Thyroid gland (tissue), 4 donors: ENCODE measurements at regions of chr7 and their contacts with region 1.

Region 1: DNA sequence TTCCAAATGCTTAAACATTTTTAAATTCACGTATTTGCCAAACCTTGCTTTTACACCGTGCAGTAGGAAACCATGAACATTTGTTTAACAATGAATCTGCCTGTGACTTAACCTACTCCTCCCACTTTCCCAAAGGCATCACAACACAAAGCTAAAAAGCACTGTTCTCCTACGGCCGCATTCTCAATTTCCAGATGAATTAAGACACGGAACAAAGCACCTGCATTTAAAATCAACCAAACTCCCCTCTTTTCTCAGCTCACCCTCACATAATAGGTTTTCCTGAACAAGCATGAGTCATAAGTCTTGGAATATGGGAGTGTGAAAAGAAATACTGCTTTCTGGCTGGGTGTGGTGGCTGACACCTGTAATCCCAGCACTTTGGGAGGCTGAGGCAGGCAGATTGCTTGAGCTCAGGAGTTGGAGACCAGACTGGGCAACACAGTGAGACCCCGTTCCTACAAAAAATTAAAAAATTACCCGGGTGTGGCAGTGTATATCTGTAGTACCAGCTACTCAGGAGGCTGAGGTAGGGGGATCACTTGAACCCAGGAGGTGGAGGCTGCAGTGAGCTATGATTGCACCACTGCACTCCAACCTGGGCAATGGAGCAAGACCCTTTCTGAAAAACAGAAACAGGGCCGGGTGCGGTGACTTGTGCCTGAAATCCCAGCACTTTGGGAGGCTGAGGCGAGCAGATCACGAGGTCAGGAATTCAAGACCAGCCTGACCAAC is 51.7 kb upstream of the CYTH3 start:
- DNase-seq: no peak
- H3K4me3 ChIP-seq: no peak overlapping the region
- H3K27ac ChIP-seq: no peak overlapping the region
- H3K4me1 ChIP-seq: peaks cover 6 to 7% of the 10 kb centered on the region in 2 donors
- H3K27me3 ChIP-seq: no peaks in the 10 kb centered on the region
- CTCF ChIP-seq: no peak
- POLR2A ChIP-seq: no peak

Region 2: GRCh38 chr7:5997222-5997808 is 326.8 kb before region 1 on chr7:
- intact Hi-C with region 1: loop called (anchors 10 kb)
- DNase-seq: peak; percentile 65 to 68
- H3K4me3 ChIP-seq: no peak overlapping the region
- H3K27ac ChIP-seq: peak overlapping the region in 1 of 3 donors; percentile 35
- H3K4me1 ChIP-seq: peaks cover 0 to 4% of the 10 kb centered on the region in 2 donors
- H3K27me3 ChIP-seq: no peaks in the 10 kb centered on the region
- CTCF ChIP-seq: peak; percentile 33 to 92 (median 66)
- POLR2A ChIP-seq: no peak

Region 3: GRCh38 chr7:6158424-6159096 is 165.6 kb before region 1 on chr7:
- intact Hi-C with region 1: loop called (anchors 5 kb)
- DNase-seq: no peak
- H3K4me3 ChIP-seq: no peak overlapping the region
- H3K27ac ChIP-seq: no peak overlapping the region
- H3K4me1 ChIP-seq: peaks cover 0 to 5% of the 10 kb centered on the region in 2 donors
- H3K27me3 ChIP-seq: no peaks in the 10 kb centered on the region
- CTCF ChIP-seq: no peak
- POLR2A ChIP-seq: no peak

Region 4: DNA sequence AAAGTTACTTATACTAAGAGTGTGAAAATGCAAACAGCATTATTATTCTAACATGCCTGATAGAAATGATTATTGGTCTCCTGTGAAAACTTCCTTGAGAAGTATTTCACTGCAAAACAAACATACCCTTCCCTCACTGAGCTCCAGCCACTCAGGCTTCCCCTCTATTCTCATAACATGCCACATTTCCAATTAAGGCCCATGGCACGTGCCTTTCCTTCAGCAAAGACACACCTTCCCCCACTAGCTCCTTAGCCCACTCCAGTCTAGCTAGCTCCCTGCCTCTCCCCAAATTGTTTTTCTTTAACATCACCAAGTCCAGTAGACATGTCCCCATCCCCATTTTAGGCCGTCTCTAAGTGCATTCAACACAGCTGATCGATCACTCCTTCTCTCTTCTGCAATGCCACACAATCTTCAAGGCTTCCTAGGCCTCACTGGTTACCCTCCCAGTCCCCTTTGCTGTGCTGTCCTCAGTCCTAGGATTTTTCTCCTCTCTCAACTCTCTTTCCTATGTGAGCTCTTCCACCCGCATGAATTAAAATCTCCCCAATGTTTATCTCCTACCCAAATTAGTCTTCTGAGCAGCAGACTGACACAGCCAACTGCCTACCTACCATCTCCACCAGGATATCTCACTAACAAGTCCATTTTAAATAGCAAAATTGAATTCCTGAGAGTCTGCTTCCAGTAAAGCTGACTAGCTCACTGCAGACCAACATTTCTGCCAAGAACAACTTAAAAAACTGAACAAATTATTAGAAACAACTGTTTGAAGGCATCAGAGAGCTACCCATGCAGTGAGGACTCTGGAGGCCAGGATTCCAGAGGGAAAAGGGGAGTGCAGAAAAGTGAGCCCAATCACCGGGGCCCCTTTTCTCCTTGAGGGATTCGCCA is 63.6 kb before region 1 on chr7:
- intact Hi-C with region 1: loop called (anchors 10 kb)
- DNase-seq: peak; percentile 52 to 59
- H3K4me3 ChIP-seq: no peak overlapping the region
- H3K27ac ChIP-seq: peak overlapping the region; percentile 24 to 71 (median 70)
- H3K4me1 ChIP-seq: peaks cover 21 to 51% of the 10 kb centered on the region in 2 donors
- H3K27me3 ChIP-seq: no peaks in the 10 kb centered on the region
- CTCF ChIP-seq: no peak
- POLR2A ChIP-seq: no peak